ENCODE measurements at regions of chr3 and their contacts with region 1.

Region 1: GRCh38 chr3:122067214-122067550 is 12.0 kb downstream of the CD86 start:
- DNase-seq: no peak
- CTCF ChIP-seq: no peak

Region 2: DNA sequence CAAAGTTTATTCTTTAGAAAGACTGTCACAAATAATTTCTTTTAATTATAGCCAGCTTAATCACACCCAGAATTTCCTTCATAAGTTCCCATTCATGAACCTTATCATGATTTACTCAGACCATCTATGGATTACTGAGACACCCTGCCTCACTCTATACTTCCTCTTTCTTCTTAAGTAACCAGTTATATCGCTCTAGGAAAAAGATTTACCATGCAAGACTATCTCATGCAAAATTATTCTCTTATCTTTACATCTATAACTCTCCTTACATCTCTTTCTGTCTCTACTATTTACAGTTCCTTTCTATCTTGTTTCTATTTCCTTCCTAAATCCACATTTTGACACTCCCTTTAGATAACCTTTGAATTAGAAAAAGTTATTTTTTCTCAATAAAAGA is 838.2 kb before region 1 on chr3:
- CTCF ChIA-PET with region 1: no interaction called
- POLR2A ChIA-PET with region 1: no interaction called
- DNase-seq: no peak
- CTCF ChIP-seq: no peak

Region 3: GRCh38 chr3:121957674-121958415 is 109.3 kb before region 1 on chr3:
- CTCF ChIA-PET with region 1: no interaction called
- POLR2A ChIA-PET with region 1: no interaction called
- DNase-seq: no peak
- CTCF ChIP-seq: no peak

Region 4: GRCh38 chr3:122055215-122055614 is 12.0 kb before region 1 on chr3 and contains the start of gene CD86:
- CTCF ChIA-PET with region 1: interaction called, 13 read pairs
- POLR2A ChIA-PET with region 1: no interaction called
- DNase-seq: peak; percentile 68
- CTCF ChIP-seq: no peak

Region 5: GRCh38 chr3:122092460-122093165 is 25.4 kb after region 1 on chr3:
- CTCF ChIA-PET with region 1: interaction called, 10 read pairs
- POLR2A ChIA-PET with region 1: interaction called, 3 read pairs
- DNase-seq: no peak
- CTCF ChIP-seq: peak; percentile 71

Measured in GM10248 (cell line).